ENCODE measurements at regions of chr17 and their contacts with region 1.

Region 1: DNA sequence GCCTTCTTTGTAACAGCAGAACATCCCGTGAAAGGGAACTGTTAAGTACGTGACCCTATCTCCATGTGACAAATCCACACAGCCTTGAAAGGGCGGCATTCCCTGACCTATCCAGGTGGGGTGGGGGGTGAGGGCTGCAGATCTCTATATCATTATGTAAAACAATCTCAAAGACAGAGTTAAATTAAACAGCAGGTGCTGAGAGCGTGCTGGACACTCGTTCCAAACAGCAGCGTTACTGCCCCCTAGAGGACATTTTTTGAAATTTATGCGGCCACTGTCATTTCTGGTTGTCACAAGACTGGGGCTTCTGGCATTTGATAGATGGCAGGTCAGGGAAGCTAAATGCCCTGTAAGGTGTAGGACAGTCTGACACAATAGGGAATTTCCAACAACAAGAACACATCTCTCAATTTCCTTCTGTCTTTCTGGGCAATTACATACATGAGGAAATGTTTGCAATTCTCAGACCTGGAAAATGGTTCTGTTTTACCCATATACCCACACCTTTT is 6.7 kb upstream of the SLC25A39 start:
- H3K4me3 ChIP-seq: no peak overlapping the region
- H3K27ac ChIP-seq: no peak overlapping the region
- H3K4me1 ChIP-seq: peaks cover 4% of the 10 kb centered on the region
- CTCF ChIP-seq: 0 out of 2 replicates have a peak, but pooled peaks have one; percentile 47

Region 2: GRCh38 chr17:44199553-44200477 is 131.5 kb before region 1 on chr17 and contains the start of gene ATXN7L3:
- CTCF ChIA-PET with region 1: interaction called, 12 read pairs
- POLR2A ChIA-PET with region 1: interaction called, 11 read pairs
- H3K4me3 ChIP-seq: peak within 1 kb of the TSS; percentile 75
- H3K27ac ChIP-seq: peak within 1 kb of the TSS; percentile 88
- H3K4me1 ChIP-seq: peaks cover 5% of the 10 kb centered on the region
- CTCF ChIP-seq: no peak

Region 3: GRCh38 chr17:44218344-44219107 is 112.8 kb before region 1 on chr17:
- CTCF ChIA-PET with region 1: interaction called, 9 read pairs
- POLR2A ChIA-PET with region 1: interaction called, 18 read pairs
- H3K4me3 ChIP-seq: peak overlapping the region; percentile 79
- H3K27ac ChIP-seq: peak overlapping the region; percentile 100
- H3K4me1 ChIP-seq: peaks cover 11% of the 10 kb centered on the region
- CTCF ChIP-seq: peak; percentile 79

Region 4: DNA sequence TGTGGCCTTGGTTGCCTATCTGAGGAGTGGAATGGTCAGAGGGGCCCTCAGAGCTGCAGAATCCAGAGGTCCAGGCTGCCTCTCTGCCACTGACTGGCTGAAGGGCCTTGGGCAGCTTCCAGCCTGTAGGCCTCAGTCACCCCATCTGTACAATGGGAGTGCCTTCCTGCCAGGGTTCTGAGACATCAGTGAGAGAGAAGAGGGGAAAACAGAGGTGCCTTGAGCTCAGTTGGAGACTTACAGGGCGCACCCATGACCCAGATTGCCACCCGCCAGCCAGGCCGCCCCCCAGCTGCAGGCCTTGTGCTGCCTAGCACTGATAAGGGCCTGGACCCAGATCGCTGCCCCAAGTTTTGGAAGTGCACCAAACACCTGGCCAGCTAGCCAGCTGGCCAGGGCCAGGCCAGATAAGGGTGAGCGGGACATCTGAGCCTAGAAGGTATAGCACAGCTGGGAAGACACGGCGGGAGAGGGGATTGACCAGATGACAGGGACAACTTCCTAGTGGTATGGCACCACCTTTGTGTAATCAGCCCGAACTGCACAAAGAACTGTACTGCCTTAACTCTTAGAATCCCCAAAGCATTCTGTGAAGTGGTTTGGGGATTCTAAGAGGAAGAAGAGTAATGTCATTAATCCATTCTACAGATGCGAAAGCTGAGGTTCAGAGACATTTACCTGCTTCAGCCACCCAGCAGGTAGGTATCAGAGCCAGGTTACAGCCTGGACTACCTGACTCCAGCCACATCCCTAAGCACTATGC is 64.7 kb before region 1 on chr17:
- CTCF ChIA-PET with region 1: no interaction called
- POLR2A ChIA-PET with region 1: no interaction called
- H3K4me3 ChIP-seq: no peak overlapping the region
- H3K27ac ChIP-seq: no peak overlapping the region
- H3K4me1 ChIP-seq: no peaks in the 10 kb centered on the region
- CTCF ChIP-seq: no peak

Region 5: DNA sequence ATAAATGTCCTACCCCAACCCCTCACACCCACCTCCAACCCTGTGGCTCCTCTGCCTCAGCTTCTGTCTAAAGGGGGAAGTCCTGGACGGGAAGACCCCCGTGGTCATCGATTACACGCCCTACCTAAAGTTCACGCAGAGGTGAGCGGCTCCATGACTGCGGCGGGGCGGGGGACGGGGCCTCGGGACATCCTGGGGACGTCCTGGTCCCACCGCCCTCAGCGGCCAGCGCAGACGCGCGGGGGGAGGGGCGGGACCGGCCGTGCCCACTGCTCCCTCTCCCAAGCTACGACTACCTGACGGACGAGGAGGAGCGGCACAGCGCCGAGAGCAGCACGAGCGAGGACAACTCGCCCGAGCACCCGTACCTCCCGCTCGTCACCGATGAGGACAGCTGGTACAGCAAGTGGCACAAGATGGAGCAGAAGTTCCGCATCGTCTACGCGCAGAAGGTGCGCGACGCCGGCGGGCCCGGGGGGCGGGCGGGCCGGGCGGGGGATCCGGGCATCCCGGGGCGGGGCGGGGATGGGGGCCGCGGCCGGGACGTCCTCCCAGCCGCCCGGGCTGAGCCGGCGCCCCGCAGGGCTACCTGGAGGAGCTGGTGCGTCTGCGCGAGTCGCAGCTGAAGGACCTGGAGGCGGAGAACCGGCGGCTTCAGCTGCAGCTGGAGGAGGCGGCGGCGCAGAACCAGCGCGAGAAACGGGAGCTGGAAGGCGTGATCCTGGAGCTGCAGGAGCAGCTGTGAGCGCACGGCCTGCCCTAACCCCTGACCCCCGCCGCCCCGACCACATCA is 16.2 kb before region 1 on chr17:
- CTCF ChIA-PET with region 1: interaction called, 10 read pairs
- POLR2A ChIA-PET with region 1: interaction called, 9 read pairs
- H3K4me3 ChIP-seq: peak overlapping the region; percentile 44
- H3K27ac ChIP-seq: peak overlapping the region; percentile 16; the same call in 1 of the 2 replicates
- H3K4me1 ChIP-seq: peaks cover 4% of the 10 kb centered on the region; the same call in 1 of the 2 replicates
- CTCF ChIP-seq: no peak

Region 6: DNA sequence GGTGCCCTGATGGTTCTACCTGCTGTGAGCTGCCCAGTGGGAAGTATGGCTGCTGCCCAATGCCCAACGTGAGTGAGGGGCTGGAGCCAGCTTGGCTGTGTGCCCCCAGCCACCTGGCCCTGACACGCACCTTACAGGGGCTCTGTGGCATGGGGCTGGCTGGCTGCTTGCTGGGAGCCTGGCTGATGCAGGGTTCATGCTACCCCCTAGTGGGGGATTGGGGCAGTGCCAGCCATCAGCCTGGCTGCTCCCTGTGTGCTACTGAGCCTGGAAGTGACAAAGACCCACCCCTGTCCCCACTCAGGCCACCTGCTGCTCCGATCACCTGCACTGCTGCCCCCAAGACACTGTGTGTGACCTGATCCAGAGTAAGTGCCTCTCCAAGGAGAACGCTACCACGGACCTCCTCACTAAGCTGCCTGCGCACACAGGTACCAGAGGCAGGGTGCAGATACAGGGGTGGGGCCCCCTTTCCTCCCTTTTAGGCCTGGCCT is 19.5 kb after region 1 on chr17:
- CTCF ChIA-PET with region 1: interaction called, 27 read pairs
- POLR2A ChIA-PET with region 1: interaction called, 11 read pairs
- H3K4me3 ChIP-seq: no peak overlapping the region
- H3K27ac ChIP-seq: no peak overlapping the region
- H3K4me1 ChIP-seq: no peaks in the 10 kb centered on the region
- CTCF ChIP-seq: peak; percentile 86

Region 7: DNA sequence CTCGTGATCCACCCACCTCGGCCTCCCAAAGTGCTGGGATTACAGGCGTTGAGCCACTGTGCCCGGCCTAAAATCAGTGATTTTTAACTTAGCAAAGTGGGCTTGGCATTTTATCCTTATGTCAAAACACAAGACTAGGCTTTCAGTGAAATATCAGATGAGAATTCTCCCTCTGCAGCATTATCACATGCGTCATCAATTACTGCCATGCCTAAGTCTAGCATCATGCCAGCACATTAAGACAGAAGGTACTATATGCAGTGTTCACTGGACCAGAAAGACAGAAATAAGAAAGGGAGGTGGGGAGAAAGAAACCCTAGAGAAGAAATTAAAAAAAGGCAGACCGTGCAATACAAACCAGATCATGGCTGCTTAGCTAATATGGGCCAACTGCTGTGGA is 142.1 kb after region 1 on chr17:
- CTCF ChIA-PET with region 1: no interaction called
- POLR2A ChIA-PET with region 1: no interaction called
- H3K4me3 ChIP-seq: no peak overlapping the region
- H3K27ac ChIP-seq: no peak overlapping the region
- H3K4me1 ChIP-seq: peaks cover 5% of the 10 kb centered on the region
- CTCF ChIP-seq: no peak

Region 8: GRCh38 chr17:44522883-44523671 is 191.8 kb after region 1 on chr17:
- CTCF ChIA-PET with region 1: interaction called, 14 read pairs
- POLR2A ChIA-PET with region 1: interaction called, 3 read pairs
- H3K4me3 ChIP-seq: no peak overlapping the region
- H3K27ac ChIP-seq: no peak overlapping the region
- H3K4me1 ChIP-seq: no peaks in the 10 kb centered on the region
- CTCF ChIP-seq: peak; percentile 78

Measured in HEK293 (cell line).